ENCODE measurements at regions of chr22 and their contacts with region 1.

Region 1: DNA sequence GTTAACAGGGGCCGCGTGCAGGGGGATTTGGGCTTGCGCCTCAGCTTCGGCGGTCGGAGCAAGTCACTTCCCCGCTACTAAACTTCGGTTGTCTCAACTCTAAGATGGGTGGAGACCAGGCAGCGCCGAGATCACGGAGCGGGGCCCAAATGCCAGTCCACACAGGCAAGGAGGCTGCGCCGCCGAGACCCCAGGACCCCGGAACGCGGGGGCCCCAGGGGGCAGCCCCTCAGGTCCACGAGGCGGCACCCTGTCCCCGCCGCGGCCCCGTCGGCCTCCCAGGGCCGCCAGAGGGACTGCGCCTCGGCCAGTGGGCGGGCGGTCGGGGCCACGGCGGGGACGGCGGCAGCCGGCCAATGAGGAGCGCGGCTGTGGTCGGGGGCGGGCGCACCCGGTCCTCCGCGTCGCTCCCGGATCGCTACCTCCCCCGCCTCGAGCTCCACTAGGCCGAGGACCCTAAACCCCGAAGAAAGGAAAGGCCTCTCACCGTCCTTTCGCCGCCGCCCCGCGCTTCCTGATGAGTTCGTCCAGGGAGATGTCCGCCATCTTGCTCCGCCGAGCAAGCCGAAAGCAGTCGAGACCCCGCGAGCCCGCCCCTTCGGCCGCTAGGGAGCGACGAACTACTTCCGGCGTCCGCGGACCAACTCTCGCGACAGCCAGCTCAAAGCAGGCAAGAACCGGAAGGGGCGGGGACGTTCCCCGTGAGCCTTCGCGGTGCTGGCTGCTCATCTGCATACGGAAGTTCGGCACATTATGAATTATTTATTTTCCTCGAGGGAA is at the start of gene POLDIP3:
- DNase-seq: peak; percentile 99
- ATAC-seq: peak; percentile 87 to 95 (median 93)
- H3K4me3 ChIP-seq: peak within 1 kb of the TSS; percentile 57 to 93 (median 84)
- H3K27ac ChIP-seq: peak within 1 kb of the TSS; percentile 79 to 99 (median 97)
- H3K4me1 ChIP-seq: peaks cover 10 to 70% (median 61%) of the 10 kb centered on the region in 9 donors
- H3K27me3 ChIP-seq: no peaks in the 10 kb centered on the region
- CTCF ChIP-seq: peak in 6 of 9 donors; percentile 25 to 54 (median 40)
- total RNA-seq, gene POLDIP3: 27.2 to 42.6 (median 33.6) TPM

Region 2: GRCh38 chr22:42511401-42511891 is 103.1 kb before region 1 on chr22:
- intact Hi-C with region 1: loop called in 1 of 10 experiments (anchors 10 kb)
- DNase-seq: no peak
- ATAC-seq: peak in 2 of 8 donors; percentile 3 to 4
- H3K4me3 ChIP-seq: no peak overlapping the region
- H3K27ac ChIP-seq: peak overlapping the region in 4 of 10 donors; percentile 21 to 82 (median 44)
- H3K4me1 ChIP-seq: peaks cover 2 to 29% (median 6%) of the 10 kb centered on the region in 9 donors
- H3K27me3 ChIP-seq: no peaks in the 10 kb centered on the region
- CTCF ChIP-seq: no peak

Region 3: GRCh38 chr22:42662114-42663021 is 47.9 kb after region 1 on chr22:
- intact Hi-C with region 1: no loop called
- DNase-seq: peak; percentile 86 to 91
- ATAC-seq: peak; percentile 89 to 97 (median 94)
- H3K4me3 ChIP-seq: peak overlapping the region; percentile 44 to 94 (median 62)
- H3K27ac ChIP-seq: peak overlapping the region in 9 of 10 donors; percentile 24 to 81 (median 70)
- H3K4me1 ChIP-seq: peaks cover 0 to 17% (median 11%) of the 10 kb centered on the region in 9 donors
- H3K27me3 ChIP-seq: peaks cover 0 to 10% (median 0%) of the 10 kb centered on the region in 7 donors
- CTCF ChIP-seq: peak; percentile 38 to 92 (median 86)

Measured in heart right ventricle (tissue), 16 donors.